T-cell (primary cell): ENCODE measurements at regions of chr7 and their contacts with region 1.

Region 1: DNA sequence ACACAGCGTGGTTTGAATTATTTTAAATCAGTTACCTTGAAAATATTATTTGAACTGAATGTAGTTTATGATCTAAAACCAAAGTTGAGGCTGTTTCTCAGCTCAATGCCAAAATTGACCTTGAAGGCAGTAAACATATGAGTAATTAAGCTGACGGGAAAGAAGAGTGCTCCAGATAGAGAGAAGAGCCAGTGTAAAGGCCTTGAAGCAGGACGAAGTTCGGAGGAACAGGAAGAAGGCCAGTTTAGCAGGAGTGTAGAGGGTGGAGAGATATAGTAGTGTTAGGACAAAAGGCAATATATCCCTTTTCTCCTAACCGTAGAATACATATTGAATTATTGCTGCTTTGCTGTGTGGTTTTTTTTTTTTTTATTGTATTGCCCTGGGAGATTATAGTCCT is 63.2 kb downstream of the CYP51A1 start:
- DNase-seq: no peak
- ATAC-seq: no peak
- H3K4me3 ChIP-seq: no peak overlapping the region
- H3K4me3 Mint-ChIP-seq: no peak overlapping the region
- H3K27ac ChIP-seq: no peak overlapping the region
- H3K27ac Mint-ChIP-seq: no peak overlapping the region
- H3K4me1 ChIP-seq: no peaks in the 10 kb centered on the region
- H3K4me1 Mint-ChIP-seq: no peaks in the 10 kb centered on the region
- H3K27me3 ChIP-seq: no peaks in the 10 kb centered on the region
- H3K27me3 Mint-ChIP-seq: no peaks in the 10 kb centered on the region

Region 2: DNA sequence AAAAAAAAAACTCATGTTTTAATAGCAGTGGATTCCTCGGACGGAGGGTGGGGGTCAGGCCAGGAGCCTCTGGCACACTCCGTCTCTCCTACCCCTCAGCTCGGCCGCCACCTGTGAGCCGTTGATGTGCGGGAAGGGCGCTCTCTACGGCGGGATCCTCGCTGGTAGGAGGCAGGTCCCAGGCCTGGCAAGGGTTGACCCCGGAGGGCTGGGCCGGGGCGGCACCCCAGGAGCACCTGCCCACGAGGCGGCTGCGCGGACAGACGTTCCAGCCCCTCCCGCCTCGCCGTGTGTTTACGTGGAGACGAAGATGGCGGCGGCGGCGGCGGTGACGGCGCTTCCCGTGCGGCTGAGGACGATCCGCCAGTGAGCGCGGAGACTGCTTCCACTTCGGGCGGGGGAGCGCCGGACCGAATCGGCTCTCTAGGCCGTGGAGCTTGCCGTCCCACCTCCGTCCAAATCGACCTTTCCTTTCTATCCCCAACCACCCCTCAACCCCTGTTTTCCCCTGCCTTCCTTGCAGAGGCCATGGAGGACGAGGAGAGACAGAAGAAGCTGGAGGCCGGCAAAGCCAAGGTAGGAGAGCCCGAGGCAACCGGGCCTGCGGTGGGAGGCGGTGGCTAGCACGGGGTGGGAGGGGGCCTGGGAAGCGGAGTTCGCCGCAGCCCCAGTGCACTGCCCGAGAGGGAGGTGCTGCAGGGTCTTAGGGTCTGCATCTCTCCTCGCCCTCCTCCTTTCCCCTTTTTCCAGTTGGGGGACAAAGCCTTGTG is 130.3 kb before region 1 on chr7 and contains the start of gene AKAP9:
- CTCF ChIA-PET with region 1: no interaction called
- POLR2A ChIA-PET with region 1: interaction called in 1 of 2 experiments, 13 read pairs
- DNase-seq: peak; percentile 70 to 93 (median 85)
- ATAC-seq: peak; percentile 91 to 96 (median 94)
- H3K4me3 ChIP-seq: peak within 1 kb of the TSS; percentile 84 to 86
- H3K4me3 Mint-ChIP-seq: peak within 1 kb of the TSS; percentile 87 to 92 (median 89)
- H3K27ac ChIP-seq: peak within 1 kb of the TSS; percentile 92
- H3K27ac Mint-ChIP-seq: peak within 1 kb of the TSS; percentile 87 to 97
- H3K4me1 ChIP-seq: peaks cover 15 to 20% of the 10 kb centered on the region in 2 experiments
- H3K4me1 Mint-ChIP-seq: peaks cover 43 to 45% (median 45%) of the 10 kb centered on the region in 3 donors
- H3K27me3 ChIP-seq: no peaks in the 10 kb centered on the region
- H3K27me3 Mint-ChIP-seq: no peaks in the 10 kb centered on the region
- total RNA-seq, gene AKAP9: 59.6 to 83.3 (median 69.0) TPM

Region 3: GRCh38 chr7:92400013-92400412 is 329.0 kb after region 1 on chr7:
- CTCF ChIA-PET with region 1: no interaction called
- POLR2A ChIA-PET with region 1: interaction called in 1 of 2 experiments, 10 read pairs
- DNase-seq: no peak
- ATAC-seq: no peak
- H3K4me3 ChIP-seq: no peak overlapping the region
- H3K4me3 Mint-ChIP-seq: no peak overlapping the region
- H3K27ac ChIP-seq: no peak overlapping the region
- H3K27ac Mint-ChIP-seq: no peak overlapping the region
- H3K4me1 ChIP-seq: peaks cover 0 to 12% of the 10 kb centered on the region in 2 experiments
- H3K4me1 Mint-ChIP-seq: peaks cover 14 to 19% (median 17%) of the 10 kb centered on the region in 3 donors
- H3K27me3 ChIP-seq: no peaks in the 10 kb centered on the region
- H3K27me3 Mint-ChIP-seq: no peaks in the 10 kb centered on the region

Region 4: GRCh38 chr7:92547579-92547978 is 476.5 kb after region 1 on chr7:
- CTCF ChIA-PET with region 1: no interaction called
- POLR2A ChIA-PET with region 1: interaction called in 1 of 2 experiments, 10 read pairs
- DNase-seq: no peak
- ATAC-seq: no peak
- H3K4me3 ChIP-seq: no peak overlapping the region
- H3K4me3 Mint-ChIP-seq: no peak overlapping the region
- H3K27ac ChIP-seq: no peak overlapping the region
- H3K27ac Mint-ChIP-seq: no peak overlapping the region
- H3K4me1 ChIP-seq: no peaks in the 10 kb centered on the region
- H3K4me1 Mint-ChIP-seq: no peaks in the 10 kb centered on the region
- H3K27me3 ChIP-seq: peaks cover 0 to 15% of the 10 kb centered on the region in 2 experiments
- H3K27me3 Mint-ChIP-seq: no peaks in the 10 kb centered on the region